Activated CD8-positive, alpha-beta T cell treated with anti-CD3 and anti-CD28 coated beads, Interleukin-2, amount 10 ng/mL, durations not matched to agents 7 days and 5 days (primary cell): ENCODE measurements at regions of chr2 and their contacts with region 1.

Region 1: GRCh38 chr2:84970868-84971509 is at the start of gene KCMF1:
- DNase-seq: peak; percentile 79
- ATAC-seq: peak; percentile 57
- H3K4me3 Mint-ChIP-seq: peak within 1 kb of the TSS; percentile 96
- H3K27ac Mint-ChIP-seq: peak within 1 kb of the TSS; percentile 100
- H3K4me1 Mint-ChIP-seq: peaks cover 47% of the 10 kb centered on the region
- H3K27me3 Mint-ChIP-seq: no peaks in the 10 kb centered on the region
- total RNA-seq, gene KCMF1: 88.9 to 92.5 TPM

Region 2: DNA sequence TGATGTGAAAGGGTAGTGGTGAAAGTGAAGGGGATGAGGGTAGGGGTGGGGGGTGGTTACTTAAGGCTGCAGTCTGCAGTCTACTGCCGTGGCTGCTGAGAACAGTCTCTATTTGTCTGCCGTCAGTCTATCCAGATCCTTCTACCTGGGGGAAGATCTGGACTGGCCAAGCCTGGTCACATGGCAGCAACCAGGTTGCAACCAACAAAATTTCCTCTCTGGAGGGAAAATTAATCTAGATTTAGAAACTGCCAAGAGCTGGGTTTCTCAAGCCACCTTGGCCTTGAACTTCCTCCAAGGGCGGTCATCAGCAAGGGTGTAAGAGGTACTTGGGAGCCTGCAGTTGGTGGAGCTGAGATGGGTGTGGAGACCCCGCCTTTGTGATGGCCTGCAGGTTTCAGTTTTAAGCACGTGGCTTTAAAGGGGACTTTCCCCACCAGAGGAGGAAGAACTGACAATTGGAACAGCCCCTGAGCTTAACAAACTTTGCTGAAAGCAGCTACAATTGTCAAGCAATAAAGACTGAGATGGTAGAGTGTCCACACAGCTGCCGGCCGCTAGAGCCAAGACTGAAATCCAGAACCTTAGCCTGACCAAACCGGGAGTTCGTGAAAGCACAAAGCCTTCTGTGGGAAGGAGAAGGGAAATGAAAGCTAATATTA is 31.4 kb before region 1 on chr2:
- CTCF ChIA-PET with region 1: interaction called, 22 read pairs
- POLR2A ChIA-PET with region 1: interaction called, 118 read pairs
- DNase-seq: peak; percentile 93
- ATAC-seq: peak; percentile 89
- H3K4me3 Mint-ChIP-seq: peak overlapping the region; percentile 69
- H3K27ac Mint-ChIP-seq: peak overlapping the region; percentile 96
- H3K4me1 Mint-ChIP-seq: peaks cover 65% of the 10 kb centered on the region
- H3K27me3 Mint-ChIP-seq: no peaks in the 10 kb centered on the region

Region 3: GRCh38 chr2:84946204-84947009 is 24.6 kb before region 1 on chr2:
- CTCF ChIA-PET with region 1: interaction called, 52 read pairs
- POLR2A ChIA-PET with region 1: interaction called, 118 read pairs
- DNase-seq: peak; percentile 77
- ATAC-seq: peak; percentile 93
- H3K4me3 Mint-ChIP-seq: peak overlapping the region; percentile 47
- H3K27ac Mint-ChIP-seq: peak overlapping the region; percentile 89
- H3K4me1 Mint-ChIP-seq: peaks cover 48% of the 10 kb centered on the region
- H3K27me3 Mint-ChIP-seq: no peaks in the 10 kb centered on the region

Region 4: GRCh38 chr2:84958135-84959044 is 12.6 kb before region 1 on chr2:
- CTCF ChIA-PET with region 1: interaction called, 4 read pairs
- POLR2A ChIA-PET with region 1: interaction called, 17 read pairs
- DNase-seq: no peak
- ATAC-seq: no peak
- H3K4me3 Mint-ChIP-seq: no peak overlapping the region
- H3K27ac Mint-ChIP-seq: no peak overlapping the region
- H3K4me1 Mint-ChIP-seq: peaks cover 19% of the 10 kb centered on the region
- H3K27me3 Mint-ChIP-seq: no peaks in the 10 kb centered on the region

Region 5: GRCh38 chr2:85017411-85018048 is 46.5 kb after region 1 on chr2:
- CTCF ChIA-PET with region 1: interaction called, 10 read pairs
- POLR2A ChIA-PET with region 1: interaction called, 5 read pairs
- DNase-seq: no peak
- ATAC-seq: no peak
- H3K4me3 Mint-ChIP-seq: no peak overlapping the region
- H3K27ac Mint-ChIP-seq: no peak overlapping the region
- H3K4me1 Mint-ChIP-seq: peaks cover 49% of the 10 kb centered on the region
- H3K27me3 Mint-ChIP-seq: no peaks in the 10 kb centered on the region